ENCODE measurements at regions of chr6 and their contacts with region 1.

Region 1: GRCh38 chr6:11093589-11094410 is at the start of gene SMIM13:
- DNase-seq: peak; percentile 90
- ATAC-seq: peak; percentile 90
- H3K4me3 Mint-ChIP-seq: peak within 1 kb of the TSS; percentile 96
- H3K27ac Mint-ChIP-seq: peak within 1 kb of the TSS; percentile 98
- H3K4me1 Mint-ChIP-seq: peaks cover 20% of the 10 kb centered on the region
- H3K27me3 Mint-ChIP-seq: peaks cover 3% of the 10 kb centered on the region
- CTCF ChIP-seq: no peak
- total RNA-seq, gene SMIM13: 5.8 and 5.9 TPM in 2 replicates

Region 2: DNA sequence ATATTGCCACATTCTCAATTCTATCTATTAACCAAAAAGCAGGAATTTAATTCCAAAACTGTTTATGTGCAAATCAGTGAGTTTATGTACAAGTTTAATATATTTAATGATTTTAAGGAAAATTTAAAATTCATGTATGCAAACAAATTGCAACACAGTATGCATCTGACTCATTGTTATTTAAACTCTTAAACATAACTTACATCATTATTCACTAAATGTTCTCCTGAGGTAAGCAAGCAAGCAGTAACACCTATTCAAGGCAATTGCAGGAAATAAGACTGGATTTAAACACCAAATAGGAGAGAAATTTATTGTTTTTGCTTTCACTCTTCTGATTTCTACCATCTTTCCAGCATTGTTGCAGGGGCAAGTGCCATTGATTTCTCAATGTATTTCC is 918.5 kb before region 1 on chr6:
- CTCF ChIA-PET with region 1: no interaction called
- POLR2A ChIA-PET with region 1: no interaction called
- intact Hi-C with region 1: no loop called
- DNase-seq: no peak
- ATAC-seq: no peak
- H3K4me3 Mint-ChIP-seq: no peak overlapping the region
- H3K27ac Mint-ChIP-seq: no peak overlapping the region
- H3K4me1 Mint-ChIP-seq: no peaks in the 10 kb centered on the region
- H3K27me3 Mint-ChIP-seq: no peaks in the 10 kb centered on the region
- CTCF ChIP-seq: no peak

Region 3: DNA sequence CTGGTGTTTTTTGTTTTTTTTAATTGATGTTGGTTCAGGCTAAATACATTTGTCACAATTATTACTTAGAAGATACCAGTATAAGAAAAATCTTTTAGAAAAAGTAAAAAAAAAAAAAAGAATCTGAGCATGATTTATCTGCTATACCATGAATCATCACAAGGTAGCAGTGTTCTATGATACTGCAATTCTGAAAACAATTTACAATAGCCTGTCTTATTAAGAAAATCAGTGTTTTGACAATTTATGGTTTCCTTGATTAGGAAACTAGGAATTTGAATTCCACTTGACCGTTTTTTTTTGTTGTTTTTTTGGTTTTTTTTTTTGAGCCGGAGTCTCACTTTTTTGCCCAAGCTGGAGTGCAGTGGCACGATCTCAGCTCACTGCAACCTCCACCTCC is 246.1 kb before region 1 on chr6:
- CTCF ChIA-PET with region 1: no interaction called
- POLR2A ChIA-PET with region 1: no interaction called
- intact Hi-C with region 1: no loop called
- DNase-seq: no peak
- ATAC-seq: no peak
- H3K4me3 Mint-ChIP-seq: no peak overlapping the region
- H3K27ac Mint-ChIP-seq: no peak overlapping the region
- H3K4me1 Mint-ChIP-seq: no peaks in the 10 kb centered on the region
- H3K27me3 Mint-ChIP-seq: peaks cover 6% of the 10 kb centered on the region
- CTCF ChIP-seq: no peak

Region 4: GRCh38 chr6:11144393-11144851 is 50.6 kb after region 1 on chr6:
- CTCF ChIA-PET with region 1: no interaction called
- POLR2A ChIA-PET with region 1: no interaction called
- intact Hi-C with region 1: loop called (anchors 5 kb)
- DNase-seq: peak; percentile 52
- ATAC-seq: peak; percentile 89
- H3K4me3 Mint-ChIP-seq: no peak overlapping the region
- H3K27ac Mint-ChIP-seq: no peak overlapping the region
- H3K4me1 Mint-ChIP-seq: peaks cover 13% of the 10 kb centered on the region
- H3K27me3 Mint-ChIP-seq: no peaks in the 10 kb centered on the region
- CTCF ChIP-seq: peak; percentile 85

Region 5: GRCh38 chr6:11277275-11278206 is 183.7 kb after region 1 on chr6:
- CTCF ChIA-PET with region 1: no interaction called
- POLR2A ChIA-PET with region 1: no interaction called
- intact Hi-C with region 1: loop called (anchors 5 kb)
- DNase-seq: no peak
- ATAC-seq: peak; percentile 69
- H3K4me3 Mint-ChIP-seq: peak overlapping the region; percentile 59
- H3K27ac Mint-ChIP-seq: peak overlapping the region; percentile 91
- H3K4me1 Mint-ChIP-seq: peaks cover 48% of the 10 kb centered on the region
- H3K27me3 Mint-ChIP-seq: no peaks in the 10 kb centered on the region
- CTCF ChIP-seq: no peak

Region 6: DNA sequence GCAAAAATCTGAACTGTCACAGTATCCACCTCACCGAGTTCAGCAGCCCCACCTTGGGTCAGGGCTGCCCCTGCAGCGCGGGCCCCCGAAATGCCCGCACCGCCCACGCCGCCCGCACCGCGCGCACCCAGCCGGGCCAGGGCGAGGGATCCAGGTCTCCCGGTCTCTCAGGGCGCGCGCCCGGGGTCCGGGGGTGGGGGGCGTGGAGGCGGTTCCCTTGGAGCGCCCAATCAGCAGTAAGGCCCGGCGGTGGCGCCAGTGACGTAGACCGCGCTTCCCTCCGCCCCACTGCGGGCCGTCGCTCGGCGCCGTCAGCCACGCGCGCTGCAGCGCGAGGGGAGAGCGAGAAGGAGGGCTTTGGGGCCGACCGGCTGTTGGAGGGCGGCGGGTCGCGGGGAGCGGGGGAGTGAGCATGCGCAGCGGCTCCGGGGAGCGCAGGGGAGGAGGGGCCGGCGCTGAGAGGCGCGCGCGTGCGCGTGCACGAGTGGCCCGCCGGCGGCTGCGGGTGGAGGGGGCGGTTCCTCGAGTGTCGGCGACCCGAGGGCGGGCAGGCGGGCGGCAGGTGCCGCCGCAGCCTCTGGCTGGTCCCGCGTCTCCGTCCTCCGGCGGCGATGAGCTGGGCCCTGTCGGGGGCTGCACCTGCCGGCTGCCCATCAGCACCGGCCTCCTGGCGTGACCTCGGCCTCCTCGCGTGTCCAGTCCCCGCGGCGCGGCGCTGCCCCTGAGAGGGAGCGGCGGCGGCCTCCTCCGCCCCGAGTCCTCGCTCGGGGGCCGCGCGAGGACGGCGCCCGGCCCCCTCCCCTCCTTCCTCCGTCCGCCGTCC is 443.6 kb after region 1 on chr6 and contains the start of gene TMEM170B:
- CTCF ChIA-PET with region 1: no interaction called
- POLR2A ChIA-PET with region 1: no interaction called
- intact Hi-C with region 1: loop called (anchors 1 kb)
- DNase-seq: peak; percentile 99
- ATAC-seq: peak; percentile 94
- H3K4me3 Mint-ChIP-seq: peak within 1 kb of the TSS; percentile 84
- H3K27ac Mint-ChIP-seq: peak within 1 kb of the TSS; percentile 74
- H3K4me1 Mint-ChIP-seq: peaks cover 11% of the 10 kb centered on the region
- H3K27me3 Mint-ChIP-seq: no peaks in the 10 kb centered on the region
- CTCF ChIP-seq: no peak
- total RNA-seq, gene TMEM170B: 2.6 and 2.8 TPM in 2 replicates

Measured in activated B cell treated with CpG ODN at 0.5 μM for 24 hours (primary cell).